Mammary epithelial cell (primary cell): ENCODE measurements at regions of chr11 and their contacts with region 1.

Region 1: DNA sequence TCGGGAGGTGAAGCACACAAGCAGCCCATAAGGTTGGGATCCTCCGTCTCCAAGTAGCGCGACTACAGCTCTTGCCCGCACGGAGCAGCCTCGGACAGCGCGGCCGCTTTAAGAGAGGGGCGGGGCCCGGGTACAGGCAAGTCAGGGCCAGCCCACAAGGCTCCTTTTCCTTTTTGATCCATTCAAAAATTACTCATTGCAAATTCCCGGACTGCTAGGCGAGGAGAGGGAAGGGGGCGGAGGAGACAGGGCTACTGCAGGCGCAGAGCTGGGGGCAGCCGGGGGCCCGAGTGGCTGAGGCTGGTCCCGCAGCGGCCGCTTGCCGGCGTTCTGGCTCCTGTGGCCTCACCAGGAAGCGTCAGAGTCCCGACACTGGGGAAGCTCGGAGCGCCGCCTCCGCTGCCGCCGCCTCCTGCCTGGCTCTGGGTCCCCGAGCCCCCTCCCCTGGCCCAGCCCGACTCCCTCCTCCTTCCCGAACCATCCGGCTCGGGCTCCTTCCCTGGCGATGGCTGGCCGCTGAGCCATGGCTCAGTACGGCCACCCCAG is at the start of gene UBASH3B:
- DNase-seq: peak; percentile 88
- H3K4me3 ChIP-seq: peak within 1 kb of the TSS; percentile 82 to 96 (median 89)
- H3K27ac ChIP-seq: peak within 1 kb of the TSS; percentile 84
- H3K4me1 ChIP-seq: peaks cover 34% of the 10 kb centered on the region
- H3K27me3 ChIP-seq: no peaks in the 10 kb centered on the region
- CTCF ChIP-seq: peak in 1 of 2 donors; percentile 2
- total RNA-seq, gene UBASH3B: 50.7 to 70.3 TPM

Region 2: GRCh38 chr11:122578168-122578825 is 77.3 kb before region 1 on chr11:
- CTCF ChIA-PET with region 1: no interaction called
- dilution Hi-C with region 1: no loop called
- in situ Hi-C with region 1: no loop called
- intact Hi-C with region 1: loop called (anchors 2 kb)
- DNase-seq: no peak
- H3K4me3 ChIP-seq: no peak overlapping the region
- H3K27ac ChIP-seq: no peak overlapping the region
- H3K4me1 ChIP-seq: peaks cover 10% of the 10 kb centered on the region
- H3K27me3 ChIP-seq: no peaks in the 10 kb centered on the region
- CTCF ChIP-seq: no peak

Region 3: DNA sequence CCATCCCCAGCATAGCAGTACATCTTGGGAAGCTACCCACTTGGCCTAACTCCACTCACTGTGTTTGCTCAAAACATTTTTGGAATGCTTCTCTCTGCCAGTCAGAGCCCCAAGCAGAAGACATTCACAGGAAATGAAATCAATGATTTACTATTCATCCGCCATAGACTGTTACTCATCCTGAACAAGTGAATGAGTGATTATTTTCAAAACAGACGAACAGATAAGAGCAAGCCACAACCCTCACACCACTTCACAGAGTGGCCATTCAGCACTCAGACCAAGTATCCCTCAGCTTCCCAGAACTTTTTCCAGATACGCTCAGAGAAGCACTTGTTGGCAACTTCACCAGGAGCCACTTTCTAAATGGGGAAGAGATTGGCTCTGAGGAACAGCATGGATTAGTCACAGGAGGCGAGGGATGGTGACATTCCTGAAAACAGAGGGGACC is 13.1 kb before region 1 on chr11:
- CTCF ChIA-PET with region 1: interaction called, 18 read pairs
- dilution Hi-C with region 1: no loop called
- in situ Hi-C with region 1: no loop called
- intact Hi-C with region 1: no loop called
- DNase-seq: peak; percentile 80
- H3K4me3 ChIP-seq: no peak overlapping the region
- H3K27ac ChIP-seq: peak overlapping the region; percentile 48
- H3K4me1 ChIP-seq: peaks cover 27% of the 10 kb centered on the region
- H3K27me3 ChIP-seq: no peaks in the 10 kb centered on the region
- CTCF ChIP-seq: no peak

Region 4: DNA sequence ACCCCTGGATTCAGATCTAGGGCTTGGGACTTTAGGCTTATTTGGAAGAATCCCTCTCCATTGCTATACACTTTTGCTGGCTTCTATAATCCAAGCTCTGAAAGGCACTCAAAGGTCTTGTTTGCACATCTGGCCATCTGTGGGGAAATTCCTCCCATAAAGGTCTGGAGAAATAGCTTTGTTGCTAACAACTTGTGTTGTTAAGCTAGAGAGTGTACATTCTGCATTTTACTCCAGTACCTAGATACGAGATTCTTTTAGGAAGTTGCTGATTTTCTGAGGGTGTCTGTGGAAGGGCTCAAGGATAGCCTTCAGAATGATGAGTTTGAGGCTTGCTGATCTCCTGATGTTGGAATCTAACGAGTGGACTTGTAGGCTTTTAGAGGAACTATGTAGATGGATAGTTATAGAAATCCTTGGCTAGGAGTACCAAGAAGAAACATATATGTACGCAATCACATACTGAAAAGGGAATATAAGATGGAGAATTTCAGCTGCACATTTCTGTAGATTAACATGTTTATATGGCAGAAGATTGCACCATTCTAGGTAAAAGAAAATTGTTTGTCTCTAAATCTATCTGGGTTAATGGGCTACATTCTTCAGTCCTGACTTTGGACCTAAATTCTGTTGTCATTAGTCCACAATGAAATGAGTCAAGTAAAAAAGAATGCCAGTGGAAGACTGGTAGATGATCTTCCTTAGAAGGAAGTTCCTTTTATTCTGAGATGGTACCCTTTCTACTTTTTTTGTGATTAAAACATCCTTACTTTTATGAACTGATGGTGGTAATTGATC is 50.9 kb after region 1 on chr11:
- CTCF ChIA-PET with region 1: no interaction called
- dilution Hi-C with region 1: no loop called
- in situ Hi-C with region 1: no loop called
- intact Hi-C with region 1: loop called (anchors 1 kb)
- DNase-seq: peak; percentile 57
- H3K4me3 ChIP-seq: no peak overlapping the region
- H3K27ac ChIP-seq: peak overlapping the region; percentile 62
- H3K4me1 ChIP-seq: peaks cover 59% of the 10 kb centered on the region
- H3K27me3 ChIP-seq: no peaks in the 10 kb centered on the region
- CTCF ChIP-seq: no peak

Region 5: DNA sequence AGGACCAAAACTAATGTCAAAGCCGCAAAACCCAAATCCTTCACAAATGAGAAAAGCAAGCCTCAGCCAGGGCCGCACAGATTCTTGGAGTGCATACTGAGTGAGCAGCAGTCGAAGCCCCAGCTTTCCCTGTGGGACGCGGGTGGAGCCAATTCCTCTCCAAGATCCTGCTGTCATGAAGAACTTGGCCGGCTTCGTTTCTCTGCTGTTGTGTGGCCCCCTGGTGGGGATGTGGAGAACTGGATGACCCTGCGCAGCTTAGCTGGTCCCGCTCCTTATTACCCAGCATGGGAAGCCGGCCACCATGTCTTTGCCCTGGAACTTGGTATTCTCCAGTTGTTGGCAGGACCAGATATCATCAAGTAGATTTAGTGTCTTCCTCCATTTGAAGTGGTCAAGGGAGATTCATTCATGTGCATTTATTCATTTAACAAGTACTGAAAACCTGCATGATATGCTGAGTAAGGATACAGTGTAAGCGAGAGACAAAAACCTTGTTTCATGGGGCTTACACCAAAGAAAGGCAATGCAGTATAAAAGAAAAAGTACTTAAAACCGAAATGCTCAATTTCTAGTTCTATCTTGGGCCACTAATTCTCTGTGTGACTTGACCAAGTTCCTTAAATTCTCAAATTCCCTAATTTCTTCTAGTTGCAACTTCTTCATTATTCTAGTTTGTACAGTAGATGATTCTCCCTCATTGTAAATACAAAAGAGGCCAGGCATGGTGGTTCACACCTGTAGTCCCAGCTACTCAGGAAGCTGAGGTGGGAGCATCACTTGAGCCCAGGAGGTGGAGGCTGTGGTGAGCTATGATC is 126.0 kb after region 1 on chr11:
- CTCF ChIA-PET with region 1: interaction called, 3 read pairs
- dilution Hi-C with region 1: loop called (anchors 10 kb)
- in situ Hi-C with region 1: no loop called
- intact Hi-C with region 1: loop called (anchors 1 kb)
- DNase-seq: peak; percentile 73
- H3K4me3 ChIP-seq: no peak overlapping the region
- H3K27ac ChIP-seq: peak overlapping the region; percentile 11
- H3K4me1 ChIP-seq: peaks cover 25% of the 10 kb centered on the region
- H3K27me3 ChIP-seq: no peaks in the 10 kb centered on the region
- CTCF ChIP-seq: peak; percentile 92 to 95